ENCODE measurements at regions of chr16 and their contacts with region 1.

Region 1: GRCh38 chr16:4846891-4847773 is at the starts of genes GLYR1 and UBN1:
- DNase-seq: peak; percentile 99
- H3K4me3 ChIP-seq: peak within 1 kb of the TSS; percentile 81 to 97 (median 94)
- H3K27ac ChIP-seq: peak within 1 kb of the TSS; percentile 97 to 99 (median 98)
- H3K4me1 ChIP-seq: peaks cover 0 to 56% (median 44%) of the 10 kb centered on the region in 4 donors
- H3K27me3 ChIP-seq: no peaks in the 10 kb centered on the region
- CTCF ChIP-seq: no peak
- EP300 ChIP-seq: peak in 1 of 4 donors; percentile 3
- POLR2A ChIP-seq: peak; percentile 49 to 70
- total RNA-seq, gene GLYR1: 56.7 to 67.3 (median 59.9) TPM
- total RNA-seq, gene UBN1: 16.4 to 27.7 (median 17.8) TPM

Region 2: DNA sequence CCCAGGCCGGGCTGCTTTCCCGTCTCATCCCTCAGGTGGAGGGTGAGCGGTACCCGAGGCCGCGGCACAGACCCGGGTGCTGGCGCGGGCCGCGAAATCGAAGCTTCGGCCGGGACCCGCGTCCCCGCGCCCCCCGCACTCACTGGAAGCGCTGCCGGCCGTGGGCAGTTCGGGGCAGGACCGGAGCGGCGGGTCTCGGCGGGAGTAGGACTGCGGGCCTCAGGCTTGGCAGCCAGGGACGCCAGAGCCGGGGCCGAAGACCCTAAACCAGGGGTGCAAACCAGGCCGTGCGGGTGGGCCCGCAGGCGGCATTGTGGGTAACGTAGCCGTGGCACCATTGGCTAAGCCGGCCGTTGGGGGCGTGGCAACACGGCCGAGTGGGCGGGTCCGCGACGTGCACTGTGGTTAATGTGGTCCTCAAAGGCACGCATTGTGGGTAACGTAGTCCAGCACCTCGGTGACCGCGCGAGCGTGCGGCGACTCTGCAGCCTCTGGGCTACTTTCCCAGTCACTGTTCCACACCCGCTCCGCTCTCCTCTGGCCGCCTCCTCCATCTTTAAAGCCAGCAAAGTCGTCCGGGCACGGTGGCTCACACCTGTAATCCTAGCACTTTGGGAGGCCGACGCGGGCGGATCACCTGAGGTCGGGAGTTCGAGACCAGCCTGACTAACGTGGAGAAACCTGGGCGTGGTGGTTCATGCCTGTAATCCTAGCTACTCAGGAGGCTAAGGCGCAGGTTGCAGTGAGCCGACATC is 80.1 kb before region 1 on chr16 and contains the start of gene ZNF500:
- intact Hi-C with region 1: loop called (anchors 2 kb)
- DNase-seq: peak; percentile 98
- H3K4me3 ChIP-seq: peak within 1 kb of the TSS; percentile 80 to 96 (median 88)
- H3K27ac ChIP-seq: peak within 1 kb of the TSS; percentile 91 to 92 (median 92)
- H3K4me1 ChIP-seq: peaks cover 0 to 38% (median 35%) of the 10 kb centered on the region in 4 donors
- H3K27me3 ChIP-seq: no peaks in the 10 kb centered on the region
- CTCF ChIP-seq: no peak
- EP300 ChIP-seq: no peak
- POLR2A ChIP-seq: peak; percentile 37 to 38
- total RNA-seq, gene ZNF500: 10.2 to 14.4 (median 12.8) TPM

Region 3: DNA sequence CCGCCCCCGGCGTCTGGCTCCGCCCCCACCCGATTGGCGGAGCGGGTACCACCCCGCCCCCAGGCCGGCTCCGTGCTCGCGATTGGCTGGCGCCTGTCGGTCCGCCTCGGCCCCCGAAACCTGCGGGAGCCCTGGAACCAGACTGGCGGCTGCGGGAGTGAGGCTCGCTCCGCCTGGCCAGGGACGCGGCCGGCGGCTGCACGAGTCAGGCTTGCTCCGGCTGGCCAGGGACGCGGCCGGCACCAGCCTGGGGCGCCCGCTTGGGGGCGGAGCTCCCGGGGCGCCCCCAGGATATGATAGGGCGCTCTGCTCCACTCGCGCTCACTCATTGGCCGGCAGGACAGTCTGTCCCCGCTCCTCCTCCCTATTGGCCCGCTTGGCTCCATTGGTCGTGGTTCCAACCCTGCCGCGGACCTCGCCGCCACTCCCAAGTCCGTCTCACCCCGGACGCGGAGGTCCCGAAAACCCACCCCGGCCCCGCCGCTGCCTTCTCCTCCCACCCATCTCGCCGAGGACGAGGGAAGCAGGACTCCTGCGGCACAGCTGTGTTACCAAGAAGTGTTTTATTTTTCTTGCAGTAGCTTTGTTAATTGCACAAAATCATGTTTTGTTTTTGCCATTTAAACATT is 44.4 kb before region 1 on chr16:
- intact Hi-C with region 1: loop called (anchors 2 kb)
- DNase-seq: peak; percentile 96
- H3K4me3 ChIP-seq: peak overlapping the region; percentile 55 to 86 (median 74)
- H3K27ac ChIP-seq: peak overlapping the region; percentile 86 to 92 (median 88)
- H3K4me1 ChIP-seq: peaks cover 0 to 41% (median 35%) of the 10 kb centered on the region in 4 donors
- H3K27me3 ChIP-seq: no peaks in the 10 kb centered on the region
- CTCF ChIP-seq: no peak
- EP300 ChIP-seq: no peak
- POLR2A ChIP-seq: no peak

Region 4: DNA sequence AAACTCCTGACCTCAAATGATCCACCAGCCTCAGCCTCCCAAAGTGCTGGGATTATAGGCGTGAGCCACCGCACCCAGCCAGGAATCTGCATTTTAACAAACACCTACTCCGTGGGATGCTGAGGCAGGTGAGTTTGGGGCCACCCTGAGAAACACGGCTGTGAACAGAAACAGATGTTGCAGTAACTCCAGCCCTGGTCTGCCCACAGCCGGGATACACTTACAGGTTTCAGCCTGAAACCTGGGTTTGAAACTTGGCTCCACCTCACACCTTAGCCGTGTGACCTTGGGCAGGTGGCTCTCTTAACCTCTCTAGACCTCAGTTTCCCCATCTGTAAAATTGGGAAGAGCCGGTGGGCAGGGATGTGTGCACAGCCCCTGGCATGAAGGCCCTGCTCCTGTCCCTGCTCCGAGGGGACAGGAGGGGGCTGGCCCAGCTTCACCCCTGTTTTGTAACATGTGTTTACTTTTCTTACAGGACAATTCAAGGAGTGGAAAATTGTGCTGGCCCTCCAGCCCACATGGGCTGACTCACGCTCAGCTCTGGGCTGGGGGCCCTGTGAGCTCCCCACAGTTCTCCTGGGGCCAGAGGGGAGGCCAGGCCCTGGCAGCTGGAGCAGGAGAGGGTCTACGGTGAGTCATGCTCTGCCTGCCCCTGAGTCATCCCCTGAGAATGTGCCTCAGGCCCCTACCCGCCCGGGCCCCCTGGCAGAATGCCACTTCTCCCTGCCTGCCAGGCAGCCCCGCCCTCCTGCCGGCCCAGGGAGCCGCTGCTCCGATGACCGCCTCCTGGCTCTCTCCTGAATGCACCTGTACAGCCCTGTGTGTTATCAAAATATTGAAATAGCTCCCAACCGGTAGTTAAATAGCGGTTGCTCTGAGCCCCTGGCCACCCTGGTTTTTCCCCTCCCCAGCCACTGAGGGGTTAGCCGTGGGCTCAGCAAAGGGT is 97.5 kb after region 1 on chr16:
- intact Hi-C with region 1: loop called (anchors 5 kb)
- DNase-seq: peak; percentile 98
- H3K4me3 ChIP-seq: peak overlapping the region in 1 of 4 donors; percentile 8
- H3K27ac ChIP-seq: peak overlapping the region; percentile 86 to 92 (median 88)
- H3K4me1 ChIP-seq: peaks cover 0 to 39% (median 36%) of the 10 kb centered on the region in 4 donors
- H3K27me3 ChIP-seq: no peaks in the 10 kb centered on the region
- CTCF ChIP-seq: no peak
- EP300 ChIP-seq: peak in 3 of 4 donors; percentile 5 to 79 (median 57)
- POLR2A ChIP-seq: no peak

Region 5: DNA sequence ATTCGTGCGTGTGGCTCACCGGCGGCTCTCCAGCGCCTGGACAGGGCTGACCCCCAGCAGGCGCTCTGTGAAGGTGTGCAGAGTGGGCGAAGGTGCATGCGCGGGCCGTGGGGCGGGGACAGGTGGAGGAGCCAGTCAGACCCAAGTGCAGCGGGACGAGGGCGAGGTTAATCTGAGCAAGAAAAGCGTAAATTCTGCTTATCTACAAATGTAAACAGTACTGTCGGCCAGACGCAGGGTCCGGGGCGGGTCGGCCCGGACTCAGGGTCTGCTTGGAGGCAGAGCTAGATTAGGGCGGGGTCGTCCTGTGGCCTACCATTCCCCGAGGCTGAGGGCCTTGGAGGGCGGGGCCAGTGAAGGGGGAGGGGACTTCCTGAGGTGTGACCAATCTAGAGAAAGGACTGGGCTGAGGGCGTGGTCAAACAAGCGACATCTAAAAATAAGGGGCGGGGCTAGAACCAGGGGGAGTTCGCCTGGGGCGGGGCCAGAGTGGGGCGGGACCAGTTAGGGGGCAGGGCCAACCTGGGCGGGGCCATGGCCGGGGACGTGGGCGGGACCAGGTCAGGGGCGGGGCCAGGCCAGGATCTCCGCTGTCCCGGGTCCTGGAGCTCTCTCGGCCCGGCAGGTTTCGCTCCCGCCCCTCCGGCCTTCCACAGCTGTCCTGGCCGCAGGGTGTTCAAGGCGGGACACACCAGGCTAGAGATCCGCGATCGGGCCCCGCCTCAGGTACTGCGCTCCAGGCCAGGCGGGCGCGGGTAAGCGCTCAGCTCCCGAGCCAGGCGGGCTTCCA is 110.8 kb after region 1 on chr16 and contains the start of gene SEC14L5:
- intact Hi-C with region 1: loop called (anchors 1 kb)
- DNase-seq: peak; percentile 98
- H3K4me3 ChIP-seq: peak within 1 kb of the TSS; percentile 28 to 58 (median 50)
- H3K27ac ChIP-seq: peak within 1 kb of the TSS; percentile 70 to 77 (median 74)
- H3K4me1 ChIP-seq: peaks cover 0 to 27% (median 18%) of the 10 kb centered on the region in 4 donors
- H3K27me3 ChIP-seq: no peaks in the 10 kb centered on the region
- CTCF ChIP-seq: no peak
- EP300 ChIP-seq: no peak
- POLR2A ChIP-seq: peak in 1 of 2 donors; percentile 60
- total RNA-seq, gene SEC14L5: 0.28 to 2.5 (median 0.65) TPM

Region 6: GRCh38 chr16:5033256-5034169 is 186.4 kb after region 1 on chr16 and contains the start of gene NAGPA:
- intact Hi-C with region 1: loop called (anchors 5 kb)
- DNase-seq: peak; percentile 95
- H3K4me3 ChIP-seq: peak within 1 kb of the TSS; percentile 79 to 95 (median 81)
- H3K27ac ChIP-seq: peak within 1 kb of the TSS; percentile 64 to 75 (median 64)
- H3K4me1 ChIP-seq: peaks cover 0 to 21% (median 16%) of the 10 kb centered on the region in 4 donors
- H3K27me3 ChIP-seq: no peaks in the 10 kb centered on the region
- CTCF ChIP-seq: no peak
- EP300 ChIP-seq: no peak
- POLR2A ChIP-seq: peak in 1 of 2 donors; percentile 23
- total RNA-seq, gene NAGPA: 11.7 to 30.7 (median 17.1) TPM